ENCODE measurements at regions of chr6 and their contacts with region 1.

Region 1: GRCh38 chr6:153032255-153032882 is 29.9 kb upstream of the MTRF1L start:
- DNase-seq: peak in 3 of 14 experiments; percentile 3 to 17 (median 16)
- ATAC-seq: no peak
- H3K4me3 ChIP-seq: no peak overlapping the region
- H3K4me3 Mint-ChIP-seq: no peak overlapping the region
- H3K27ac ChIP-seq: no peak overlapping the region
- H3K27ac Mint-ChIP-seq: no peak overlapping the region
- H3K4me1 ChIP-seq: no peaks in the 10 kb centered on the region
- H3K4me1 Mint-ChIP-seq: no peaks in the 10 kb centered on the region
- H3K27me3 ChIP-seq: no peaks in the 10 kb centered on the region
- H3K27me3 Mint-ChIP-seq: peaks cover 40% of the 10 kb centered on the region
- CTCF ChIP-seq: no peak

Region 2: GRCh38 chr6:153312641-153313040 is 280.3 kb after region 1 on chr6:
- CTCF ChIA-PET with region 1: no interaction called
- POLR2A ChIA-PET with region 1: no interaction called
- intact Hi-C with region 1: loop called (anchors 5 kb)
- DNase-seq: peak in 6 of 14 experiments; percentile 0 to 33 (median 12)
- ATAC-seq: no peak
- H3K4me3 ChIP-seq: no peak overlapping the region
- H3K4me3 Mint-ChIP-seq: no peak overlapping the region
- H3K27ac ChIP-seq: no peak overlapping the region
- H3K27ac Mint-ChIP-seq: no peak overlapping the region
- H3K4me1 ChIP-seq: no peaks in the 10 kb centered on the region
- H3K4me1 Mint-ChIP-seq: no peaks in the 10 kb centered on the region
- H3K27me3 ChIP-seq: no peaks in the 10 kb centered on the region
- H3K27me3 Mint-ChIP-seq: no peaks in the 10 kb centered on the region
- CTCF ChIP-seq: no peak

Region 3: GRCh38 chr6:153511896-153512496 is 479.6 kb after region 1 on chr6:
- CTCF ChIA-PET with region 1: no interaction called
- POLR2A ChIA-PET with region 1: no interaction called
- intact Hi-C with region 1: loop called (anchors 5 kb)
- DNase-seq: peak in 4 of 14 experiments; percentile 2 to 18 (median 11)
- ATAC-seq: peak; percentile 39
- H3K4me3 ChIP-seq: no peak overlapping the region
- H3K4me3 Mint-ChIP-seq: no peak overlapping the region
- H3K27ac ChIP-seq: no peak overlapping the region
- H3K27ac Mint-ChIP-seq: no peak overlapping the region
- H3K4me1 ChIP-seq: no peaks in the 10 kb centered on the region
- H3K4me1 Mint-ChIP-seq: no peaks in the 10 kb centered on the region
- H3K27me3 ChIP-seq: no peaks in the 10 kb centered on the region
- H3K27me3 Mint-ChIP-seq: no peaks in the 10 kb centered on the region
- CTCF ChIP-seq: peak; percentile 47

Measured in CD4-positive, alpha-beta T cell (primary cell).